ENCODE measurements at regions of chr10 and their contacts with region 1.

Region 1: DNA sequence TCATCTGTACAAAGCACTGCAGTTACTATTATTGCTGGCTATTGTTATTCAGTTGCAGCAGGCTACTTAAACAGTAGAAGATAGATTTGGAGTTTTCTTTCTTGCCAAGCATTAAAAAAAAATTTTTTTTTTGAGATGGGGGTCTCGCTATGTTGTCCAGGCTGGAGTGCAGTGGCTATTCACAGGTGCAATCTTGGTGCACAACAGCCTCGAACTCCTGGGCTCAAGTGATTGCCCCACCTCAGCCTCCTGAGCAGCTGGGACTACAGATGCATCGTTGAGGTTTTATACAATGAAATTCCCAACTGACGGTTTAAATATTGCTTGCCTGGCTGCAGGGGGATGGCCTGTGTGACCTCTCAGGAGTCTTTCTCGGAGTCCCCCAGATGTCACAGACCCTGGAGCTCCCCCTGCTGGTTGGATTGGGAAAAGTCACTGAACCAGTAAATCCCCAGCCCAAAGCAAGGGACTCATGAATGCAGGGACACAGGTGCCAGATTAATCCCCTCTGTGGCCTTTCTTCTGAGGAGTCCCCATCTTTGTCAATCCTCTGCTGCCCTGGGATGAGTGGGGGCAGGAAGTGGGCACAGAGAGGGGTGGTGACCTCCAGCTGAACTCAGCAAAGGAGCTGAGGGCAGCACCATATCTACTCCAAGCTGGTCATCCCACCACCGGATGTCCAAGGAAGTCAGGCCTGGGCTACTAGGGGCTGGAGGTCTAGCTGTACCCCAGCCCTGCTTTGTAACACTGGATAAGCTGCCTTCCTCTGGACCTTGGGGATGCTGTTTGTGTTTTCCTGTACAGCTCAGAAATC is 149.6 kb downstream of the C10orf105 start:
- DNase-seq: peak; percentile 86
- H3K4me3 ChIP-seq: peak overlapping the region in 1 of 2 experiments; percentile 44; a peak in 1 of 4 replicates
- H3K27ac ChIP-seq: no peak overlapping the region
- H3K4me1 ChIP-seq: no peaks in the 10 kb centered on the region; a peak in 1 of 4 replicates
- H3K27me3 ChIP-seq: peaks cover 3% of the 10 kb centered on the region
- CTCF ChIP-seq: peak; percentile 84
- EP300 ChIP-seq: no peak
- RAD21 ChIP-seq: peak; percentile 80

Region 2: DNA sequence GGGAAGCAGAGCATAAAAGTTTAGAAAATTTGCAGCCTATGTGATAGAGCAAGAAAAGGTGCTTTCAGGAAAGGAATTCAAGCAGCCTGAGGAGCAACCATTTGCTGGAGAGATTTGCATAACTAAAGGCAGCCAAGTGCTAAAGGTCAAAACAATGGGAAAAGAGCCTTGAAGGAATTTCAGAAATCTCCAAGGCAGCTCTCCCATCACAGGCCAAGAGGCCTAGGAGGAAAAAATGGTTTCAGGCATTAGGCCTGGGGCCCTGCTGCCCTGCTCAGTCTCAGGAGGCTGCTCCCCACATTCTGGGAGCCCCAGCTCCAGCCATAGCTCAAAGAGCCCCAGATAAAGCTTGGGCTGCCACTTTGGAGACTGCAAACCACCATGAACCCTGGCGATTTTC is 453.6 kb before region 1 on chr10:
- CTCF ChIA-PET with region 1: no interaction called
- POLR2A ChIA-PET with region 1: no interaction called
- DNase-seq: no peak
- H3K4me3 ChIP-seq: no peak overlapping the region
- H3K27ac ChIP-seq: no peak overlapping the region
- H3K4me1 ChIP-seq: no peaks in the 10 kb centered on the region
- H3K27me3 ChIP-seq: no peaks in the 10 kb centered on the region
- CTCF ChIP-seq: no peak
- EP300 ChIP-seq: no peak
- RAD21 ChIP-seq: no peak

Region 3: DNA sequence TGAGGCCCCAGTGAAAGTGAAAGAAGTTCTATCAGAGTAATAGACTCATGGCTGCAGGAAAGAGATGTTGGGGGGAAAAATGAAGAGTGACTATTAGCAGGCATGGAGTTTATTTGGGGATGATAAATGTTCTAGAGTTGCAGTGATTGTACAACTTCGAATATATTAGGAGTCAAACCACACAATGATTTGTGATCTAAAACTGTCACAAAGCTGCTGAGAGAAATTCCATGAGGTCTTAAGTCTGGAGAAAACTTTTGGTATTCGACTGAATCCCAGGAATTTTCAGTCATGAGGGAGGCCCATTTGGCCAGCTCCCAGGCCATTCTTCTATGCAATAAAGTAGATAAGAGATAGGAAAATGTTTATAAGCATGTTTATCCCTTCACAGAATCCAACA is 413.5 kb before region 1 on chr10:
- CTCF ChIA-PET with region 1: no interaction called
- POLR2A ChIA-PET with region 1: no interaction called
- DNase-seq: no peak
- H3K4me3 ChIP-seq: no peak overlapping the region
- H3K27ac ChIP-seq: no peak overlapping the region
- H3K4me1 ChIP-seq: no peaks in the 10 kb centered on the region
- H3K27me3 ChIP-seq: no peaks in the 10 kb centered on the region
- CTCF ChIP-seq: no peak
- EP300 ChIP-seq: no peak
- RAD21 ChIP-seq: no peak

Region 4: DNA sequence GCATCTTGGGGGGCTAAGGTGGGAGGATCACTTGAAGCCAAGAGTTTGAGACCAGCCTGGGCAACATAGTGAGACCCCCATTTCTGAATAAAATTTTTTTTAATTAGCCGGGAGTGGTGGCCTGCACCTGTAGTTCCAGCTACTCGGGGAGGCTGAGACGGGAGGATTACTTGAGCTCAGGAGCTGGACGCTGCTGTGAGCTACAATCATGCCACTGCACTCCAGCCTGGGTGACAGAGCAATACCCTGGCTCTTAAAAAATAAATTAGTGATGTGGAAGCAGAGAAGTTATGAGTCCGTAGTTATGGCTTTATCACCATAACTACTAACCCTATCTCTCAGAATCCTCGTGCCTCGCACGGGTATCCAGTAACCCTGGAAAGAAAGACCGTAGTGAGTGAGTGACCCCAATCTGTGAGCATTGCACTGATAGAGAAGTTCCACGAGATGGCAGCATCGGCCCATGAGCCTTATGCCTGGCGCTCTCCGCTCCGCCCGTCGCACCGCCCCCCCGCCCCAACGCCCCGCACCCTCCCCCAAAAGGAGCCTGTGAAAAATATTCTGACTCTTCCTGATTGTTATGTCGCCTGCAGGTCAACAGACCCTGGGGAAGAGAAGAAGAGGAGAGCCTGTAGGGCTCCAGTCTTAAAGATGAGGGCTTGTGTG is 255.8 kb before region 1 on chr10:
- CTCF ChIA-PET with region 1: interaction called, 19 read pairs
- POLR2A ChIA-PET with region 1: no interaction called
- DNase-seq: peak; percentile 81
- H3K4me3 ChIP-seq: no peak overlapping the region
- H3K27ac ChIP-seq: no peak overlapping the region
- H3K4me1 ChIP-seq: peaks cover 0 to 11% of the 10 kb centered on the region in 2 experiments; a peak in 1 of 4 replicates
- H3K27me3 ChIP-seq: no peaks in the 10 kb centered on the region
- CTCF ChIP-seq: peak; percentile 69
- EP300 ChIP-seq: no peak
- RAD21 ChIP-seq: peak; percentile 80

Region 5: DNA sequence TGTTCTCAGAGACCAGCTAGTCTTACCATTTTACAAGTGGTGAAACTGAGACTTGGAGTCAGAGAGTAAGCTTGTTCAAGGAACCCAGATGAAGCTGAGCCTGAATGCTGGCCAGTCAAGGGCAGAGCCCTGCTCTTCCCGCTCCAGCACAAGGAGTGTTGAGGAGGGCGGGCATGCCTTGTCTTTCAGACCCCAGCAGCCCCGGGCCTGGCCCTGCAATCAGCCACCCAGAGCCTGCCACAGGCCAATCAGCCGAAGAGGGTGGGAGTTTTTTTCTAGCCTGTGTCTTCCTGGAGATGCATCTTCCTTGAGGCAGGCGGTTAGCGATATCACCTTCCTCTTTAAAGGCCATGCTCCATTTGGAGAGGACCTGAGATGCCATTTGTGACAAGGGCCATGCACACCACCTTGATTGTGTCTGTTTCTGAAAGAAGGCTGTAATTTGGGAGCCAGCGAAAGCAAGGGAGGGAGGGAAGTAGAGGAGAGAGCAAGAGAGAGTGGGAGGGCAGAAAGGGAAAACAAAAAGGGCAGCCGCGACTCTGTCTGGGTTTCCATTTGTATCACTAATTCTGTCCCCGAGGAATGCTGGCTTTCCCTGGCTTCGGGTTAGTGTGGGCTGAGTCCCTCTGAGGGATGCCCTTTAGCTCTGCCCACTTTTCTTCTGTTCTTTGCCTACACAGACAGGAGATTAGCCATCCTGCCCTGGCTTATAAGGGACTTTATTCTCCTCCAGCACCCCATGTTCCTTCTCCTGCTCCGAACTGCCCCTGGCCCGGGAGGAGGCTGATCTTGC is 165.3 kb before region 1 on chr10:
- CTCF ChIA-PET with region 1: interaction called, 223 read pairs
- POLR2A ChIA-PET with region 1: no interaction called
- DNase-seq: no peak
- H3K4me3 ChIP-seq: no peak overlapping the region
- H3K27ac ChIP-seq: no peak overlapping the region
- H3K4me1 ChIP-seq: no peaks in the 10 kb centered on the region
- H3K27me3 ChIP-seq: peaks cover 15% of the 10 kb centered on the region; the same call in 1 of the 2 replicates
- CTCF ChIP-seq: no peak
- EP300 ChIP-seq: no peak
- RAD21 ChIP-seq: no peak

Region 6: DNA sequence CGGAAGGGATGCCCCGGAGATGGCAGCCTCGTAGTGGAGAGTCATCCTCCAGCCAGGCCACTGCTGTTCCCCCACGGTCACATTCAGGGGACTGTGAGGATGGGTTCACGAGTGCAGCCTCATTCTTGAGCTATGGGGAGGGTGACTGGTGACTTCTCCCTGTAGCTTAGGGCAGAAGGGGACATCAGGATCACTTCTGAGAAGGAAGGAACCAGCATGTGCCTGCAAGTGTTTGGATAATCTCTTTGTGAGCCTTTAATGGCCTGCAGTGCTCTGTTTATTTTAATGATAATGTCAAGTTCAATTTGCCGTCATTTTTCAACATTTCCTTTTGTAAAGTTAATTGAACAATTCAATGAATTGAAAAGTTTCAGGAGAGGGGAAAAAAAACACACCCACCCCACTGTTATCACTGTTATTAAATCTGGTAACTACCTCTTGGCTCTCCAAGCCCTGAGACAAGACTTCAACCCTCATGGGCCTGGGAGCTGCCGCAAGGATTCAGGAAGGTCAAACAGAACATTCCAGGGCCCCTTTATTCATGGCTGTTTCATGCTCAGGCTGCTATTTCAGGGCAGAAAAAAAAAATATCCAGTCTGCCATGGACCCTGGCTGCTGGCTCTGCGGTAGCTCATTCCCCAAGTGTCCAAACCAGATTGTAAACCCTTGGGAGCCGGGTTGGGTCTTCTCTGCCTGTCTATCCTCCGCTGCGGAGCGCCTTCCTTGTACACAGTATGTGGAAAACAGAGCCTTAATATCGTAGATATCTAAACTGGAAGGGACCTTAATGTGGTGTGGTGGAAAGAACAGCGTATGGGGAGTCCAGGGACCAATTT is 72.8 kb before region 1 on chr10:
- CTCF ChIA-PET with region 1: interaction called, 17 read pairs
- POLR2A ChIA-PET with region 1: no interaction called
- DNase-seq: peak; percentile 43
- H3K4me3 ChIP-seq: no peak overlapping the region
- H3K27ac ChIP-seq: no peak overlapping the region
- H3K4me1 ChIP-seq: peaks cover 0 to 13% of the 10 kb centered on the region in 2 experiments; a peak in 2 of 4 replicates
- H3K27me3 ChIP-seq: no peaks in the 10 kb centered on the region; the same call in none of the 2 replicates
- CTCF ChIP-seq: no peak
- EP300 ChIP-seq: no peak
- RAD21 ChIP-seq: no peak

Region 7: GRCh38 chr10:71538608-71539260 is 31.2 kb before region 1 on chr10:
- CTCF ChIA-PET with region 1: interaction called, 10 read pairs
- POLR2A ChIA-PET with region 1: no interaction called
- DNase-seq: no peak
- H3K4me3 ChIP-seq: no peak overlapping the region
- H3K27ac ChIP-seq: no peak overlapping the region
- H3K4me1 ChIP-seq: peaks cover 0 to 34% of the 10 kb centered on the region in 2 experiments; a peak in 1 of 4 replicates
- H3K27me3 ChIP-seq: peaks cover 41% of the 10 kb centered on the region
- CTCF ChIP-seq: no peak
- EP300 ChIP-seq: no peak
- RAD21 ChIP-seq: no peak

Region 8: GRCh38 chr10:71597821-71598498 is 28.0 kb after region 1 on chr10:
- CTCF ChIA-PET with region 1: interaction called, 17 read pairs
- POLR2A ChIA-PET with region 1: no interaction called
- DNase-seq: no peak
- H3K4me3 ChIP-seq: no peak overlapping the region
- H3K27ac ChIP-seq: no peak overlapping the region
- H3K4me1 ChIP-seq: no peaks in the 10 kb centered on the region
- H3K27me3 ChIP-seq: no peaks in the 10 kb centered on the region; the same call in 1 of the 2 replicates
- CTCF ChIP-seq: no peak
- EP300 ChIP-seq: no peak
- RAD21 ChIP-seq: no peak